ENCODE measurements at regions of chr1 and their contacts with region 1.

Region 1: GRCh38 chr1:247360991-247361731 is 29.5 kb upstream of the ZNF496 start:
- H3K4me3 Mint-ChIP-seq: peak overlapping the region; percentile 2
- H3K27ac Mint-ChIP-seq: peak overlapping the region; percentile 82
- H3K4me1 Mint-ChIP-seq: peaks cover 53% of the 10 kb centered on the region
- H3K27me3 Mint-ChIP-seq: peaks cover 10% of the 10 kb centered on the region

Region 2: GRCh38 chr1:247331172-247331991 is 29.8 kb before region 1 on chr1 and contains the start of gene ZNF496:
- intact Hi-C with region 1: loop called (anchors 2 kb)
- H3K4me3 Mint-ChIP-seq: peak within 1 kb of the TSS; percentile 85
- H3K27ac Mint-ChIP-seq: peak within 1 kb of the TSS; percentile 85
- H3K4me1 Mint-ChIP-seq: peaks cover 62% of the 10 kb centered on the region
- H3K27me3 Mint-ChIP-seq: peaks cover 24% of the 10 kb centered on the region

Measured in dendritic cell treated with granulocyte-macrophage colony-stimulating factor and Interleukin-4, amounts not matched to agents 40 ng/mL and 50 ng/mL, for 4 days (primary cell).